H1 (cell line): ENCODE measurements at regions of chr20 and their contacts with region 1.

Region 1: GRCh38 chr20:60467078-60467477 is 508.9 kb downstream of the CDH26 start:
- DNase-seq: no peak
- H3K4me3 ChIP-seq: no peak overlapping the region
- H3K27ac ChIP-seq: no peak overlapping the region
- H3K4me1 ChIP-seq: no peaks in the 10 kb centered on the region
- H3K27me3 ChIP-seq: no peaks in the 10 kb centered on the region
- CTCF ChIP-seq: no peak
- EP300 ChIP-seq: no peak
- POLR2A ChIP-seq: no peak
- RAD21 ChIP-seq: no peak

Region 2: GRCh38 chr20:60420676-60421229 is 46.3 kb before region 1 on chr20:
- CTCF ChIA-PET with region 1: no interaction called
- POLR2A ChIA-PET with region 1: no interaction called
- DNase-seq: no peak
- H3K4me3 ChIP-seq: no peak overlapping the region
- H3K27ac ChIP-seq: no peak overlapping the region
- H3K4me1 ChIP-seq: peaks cover 0 to 2% (median 0%) of the 10 kb centered on the region in 4 experiments; a peak in 1 of 7 replicates
- H3K27me3 ChIP-seq: no peaks in the 10 kb centered on the region
- CTCF ChIP-seq: no peak
- EP300 ChIP-seq: no peak
- POLR2A ChIP-seq: no peak
- RAD21 ChIP-seq: no peak

Region 3: DNA sequence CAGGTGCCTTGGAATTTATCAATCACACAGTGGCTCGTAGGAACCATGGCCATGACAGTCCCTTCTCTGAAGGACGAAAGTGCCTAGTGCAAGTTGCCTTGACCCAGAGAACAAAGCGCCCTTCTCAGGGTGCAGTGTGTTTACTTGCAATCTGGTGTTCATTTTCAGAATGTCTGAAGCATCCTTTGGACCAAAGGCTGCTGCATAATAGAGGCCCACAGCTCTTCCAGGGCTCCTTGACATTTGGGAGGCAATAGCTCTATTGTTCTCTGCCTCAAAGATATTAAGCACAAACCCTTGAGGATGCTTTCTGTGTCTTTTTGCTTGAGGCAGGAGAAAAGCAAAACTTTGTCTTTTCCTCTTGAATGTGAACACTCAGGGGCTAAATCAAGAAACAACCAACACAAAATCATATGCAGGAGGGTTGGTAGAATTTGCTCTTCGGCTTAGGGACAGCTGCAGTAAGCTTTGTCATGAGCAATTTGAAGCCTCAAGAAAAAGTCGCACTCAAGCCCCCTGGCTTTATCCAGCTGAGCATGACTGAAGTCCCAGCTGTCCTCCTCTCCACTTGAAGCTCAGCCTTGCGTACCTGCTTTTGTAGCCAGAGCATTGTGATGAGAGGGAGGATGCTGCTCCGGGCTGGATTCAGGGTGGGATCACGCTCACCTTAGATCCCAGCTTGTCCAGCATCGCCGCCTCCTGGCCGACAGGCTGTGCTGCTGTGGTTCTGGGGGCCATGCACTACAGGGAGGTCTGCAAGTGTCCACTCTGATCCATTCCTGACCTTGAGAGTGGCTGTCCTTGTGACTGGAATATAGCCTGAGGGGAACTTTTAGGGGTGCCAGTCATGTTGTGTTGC is 13.5 kb before region 1 on chr20:
- CTCF ChIA-PET with region 1: interaction called, 40 read pairs
- POLR2A ChIA-PET with region 1: no interaction called
- DNase-seq: peak; percentile 36 to 67
- H3K4me3 ChIP-seq: no peak overlapping the region
- H3K27ac ChIP-seq: no peak overlapping the region
- H3K4me1 ChIP-seq: no peaks in the 10 kb centered on the region
- H3K27me3 ChIP-seq: no peaks in the 10 kb centered on the region; a peak in 3 of 7 replicates
- CTCF ChIP-seq: peak; percentile 73 to 92 (median 88)
- EP300 ChIP-seq: no peak
- POLR2A ChIP-seq: no peak
- RAD21 ChIP-seq: peak; percentile 90